Activated T-helper 2 cell treated with anti-CD3 and anti-CD28 coated beads, Interferon-gamma antibody, Interleukin-2, Interleukin-4, amounts not matched to agents 10 μg/mL and 5 μg/mL and 100 μg/mL, durations not matched to agents 14 hours and 24 hours and 36 hours (primary cell): ENCODE measurements at regions of chr5 and their contacts with region 1.

Region 1: DNA sequence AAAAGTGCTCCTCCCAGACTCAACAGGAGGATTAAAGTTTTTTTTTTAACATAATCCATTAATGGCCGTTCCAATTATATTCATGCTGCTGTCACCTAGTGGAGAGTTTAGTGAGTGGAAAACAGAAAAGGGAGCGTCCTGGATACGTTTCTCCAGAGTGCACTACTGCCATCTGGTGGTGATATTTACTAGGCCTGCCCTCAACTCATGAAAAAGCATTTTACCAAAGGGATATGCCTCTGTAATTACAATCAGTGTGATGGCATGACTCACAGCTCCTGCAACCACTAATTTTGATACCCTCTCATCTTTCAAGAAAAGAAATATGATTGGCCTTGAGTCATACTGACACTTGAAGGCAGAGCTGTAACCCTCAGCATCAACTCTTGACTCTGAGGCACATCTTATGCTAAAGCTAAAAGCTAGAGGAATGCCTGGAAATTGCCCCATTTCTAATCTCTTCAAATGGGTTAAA is 20.0 kb downstream of the MINAR2 start:
- DNase-seq: peak; percentile 42
- H3K4me3 Mint-ChIP-seq: no peak overlapping the region
- H3K27ac Mint-ChIP-seq: no peak overlapping the region
- H3K4me1 Mint-ChIP-seq: no peaks in the 10 kb centered on the region
- H3K27me3 Mint-ChIP-seq: no peaks in the 10 kb centered on the region

Region 2: DNA sequence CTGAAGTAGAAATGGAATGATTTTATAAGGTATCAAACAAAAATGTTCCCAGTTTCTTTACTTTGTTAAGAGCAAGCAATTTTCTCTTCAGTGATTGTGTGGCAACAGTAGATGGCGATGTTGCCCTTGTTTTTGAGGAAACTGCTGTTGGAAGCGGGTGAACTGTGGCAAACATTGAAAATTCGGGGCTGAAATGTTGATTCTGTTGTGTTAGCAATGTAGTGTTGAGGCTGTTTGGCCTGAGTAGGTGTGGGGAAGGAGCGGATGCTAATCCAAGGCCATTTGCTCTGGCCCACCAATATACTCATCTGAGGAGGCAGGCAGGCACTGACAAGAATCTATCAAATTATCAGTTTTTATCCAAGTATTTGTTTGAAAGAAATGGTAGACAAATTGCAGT is 1554.6 kb before region 1 on chr5:
- intact Hi-C with region 1: loop called (anchors 5 kb)
- DNase-seq: no peak
- H3K4me3 Mint-ChIP-seq: no peak overlapping the region
- H3K27ac Mint-ChIP-seq: no peak overlapping the region
- H3K4me1 Mint-ChIP-seq: no peaks in the 10 kb centered on the region
- H3K27me3 Mint-ChIP-seq: peaks cover 2% of the 10 kb centered on the region

Region 3: DNA sequence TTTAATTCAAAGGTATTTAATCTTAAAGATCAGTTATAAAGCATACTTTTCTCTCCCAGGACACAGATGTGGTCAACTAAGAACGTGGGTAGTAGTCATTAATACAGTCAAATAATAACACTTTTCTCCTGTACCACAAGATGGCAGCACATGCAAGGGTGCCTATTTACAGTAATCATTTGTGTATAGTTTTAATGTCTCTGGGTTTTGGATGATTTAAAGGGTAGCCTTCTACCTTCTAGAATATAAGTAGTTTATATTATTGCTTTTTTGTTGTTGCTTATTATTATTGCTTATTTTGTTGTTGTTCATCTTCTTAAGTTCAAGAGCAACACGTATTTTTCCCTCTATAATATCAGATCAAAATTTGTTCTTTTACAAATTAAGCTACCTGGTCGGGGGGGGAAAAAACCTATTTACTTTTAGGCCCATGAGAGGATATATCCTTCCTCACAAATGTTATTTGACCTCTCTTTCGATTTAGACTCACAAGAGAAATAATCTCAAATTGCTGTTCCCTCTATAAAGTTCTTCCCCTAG is 862.3 kb before region 1 on chr5:
- intact Hi-C with region 1: loop called (anchors 1 kb)
- DNase-seq: no peak
- H3K4me3 Mint-ChIP-seq: no peak overlapping the region
- H3K27ac Mint-ChIP-seq: no peak overlapping the region
- H3K4me1 Mint-ChIP-seq: no peaks in the 10 kb centered on the region
- H3K27me3 Mint-ChIP-seq: no peaks in the 10 kb centered on the region

Region 4: DNA sequence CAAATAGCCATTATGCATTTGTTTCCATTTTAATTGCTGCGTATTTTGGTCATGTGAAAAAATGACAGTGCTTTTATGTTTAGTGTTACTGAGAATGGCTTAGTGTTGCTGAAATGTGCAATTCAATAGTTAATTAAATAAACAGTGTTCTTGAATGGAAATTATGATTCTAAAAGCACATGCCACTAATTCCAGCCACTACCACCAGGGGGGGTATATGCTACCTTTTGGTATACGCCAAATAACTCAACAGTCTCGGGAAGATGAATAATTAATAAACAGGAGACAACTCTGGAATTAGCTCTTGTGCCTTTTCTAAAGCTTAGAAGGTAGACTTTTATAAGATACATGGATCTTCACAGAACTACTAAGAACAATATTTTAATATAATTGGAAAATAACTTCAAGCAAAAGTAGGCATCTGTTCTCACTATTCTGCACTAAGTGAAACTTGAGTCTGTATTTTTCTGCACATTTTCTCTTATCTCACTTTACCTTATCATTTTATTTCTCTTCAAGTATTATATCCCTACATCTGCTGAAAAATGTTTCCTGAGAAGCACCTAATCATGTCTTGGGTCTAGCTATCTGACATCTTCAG is 103.5 kb before region 1 on chr5:
- intact Hi-C with region 1: loop called (anchors 1 kb)
- DNase-seq: no peak
- H3K4me3 Mint-ChIP-seq: no peak overlapping the region
- H3K27ac Mint-ChIP-seq: no peak overlapping the region
- H3K4me1 Mint-ChIP-seq: no peaks in the 10 kb centered on the region
- H3K27me3 Mint-ChIP-seq: no peaks in the 10 kb centered on the region

Region 5: DNA sequence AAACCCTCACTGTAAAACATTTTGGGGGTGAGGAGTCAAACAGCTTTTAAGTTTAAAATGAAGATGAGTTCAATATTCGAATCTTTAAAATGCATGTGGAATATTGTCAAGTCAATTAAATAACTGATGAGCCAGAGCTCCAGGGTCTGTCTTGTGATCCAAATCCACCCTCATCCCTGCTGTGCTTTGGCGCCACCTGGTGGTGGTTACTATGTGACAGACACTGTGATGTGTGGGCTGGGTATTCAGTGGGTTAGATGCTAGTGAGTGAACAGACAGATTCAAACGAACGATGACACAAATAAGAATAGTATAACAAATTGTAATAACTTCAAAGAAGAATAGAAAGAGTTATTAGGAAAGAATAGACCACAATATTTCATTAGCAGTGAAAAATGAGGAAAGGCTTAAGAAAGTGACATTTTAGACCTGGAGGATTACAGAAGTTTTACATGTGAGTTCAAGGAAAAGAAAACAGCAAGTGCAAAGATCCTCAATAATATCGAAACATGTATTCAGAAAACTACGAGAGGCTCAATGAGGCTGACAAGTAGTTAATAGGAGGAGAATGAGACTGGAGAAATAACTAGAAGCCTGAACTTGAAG is 84.9 kb after region 1 on chr5:
- intact Hi-C with region 1: loop called (anchors 1 kb)
- DNase-seq: peak; percentile 36
- H3K4me3 Mint-ChIP-seq: no peak overlapping the region
- H3K27ac Mint-ChIP-seq: no peak overlapping the region
- H3K4me1 Mint-ChIP-seq: no peaks in the 10 kb centered on the region
- H3K27me3 Mint-ChIP-seq: no peaks in the 10 kb centered on the region

Region 6: GRCh38 chr5:131109540-131110255 is 1341.8 kb after region 1 on chr5:
- intact Hi-C with region 1: loop called (anchors 2 kb)
- DNase-seq: no peak
- H3K4me3 Mint-ChIP-seq: no peak overlapping the region
- H3K27ac Mint-ChIP-seq: no peak overlapping the region
- H3K4me1 Mint-ChIP-seq: peaks cover 6% of the 10 kb centered on the region
- H3K27me3 Mint-ChIP-seq: no peaks in the 10 kb centered on the region